Right cardiac atrium (tissue), 5 donors: ENCODE measurements at regions of chr7 and their contacts with region 1.

Region 1: DNA sequence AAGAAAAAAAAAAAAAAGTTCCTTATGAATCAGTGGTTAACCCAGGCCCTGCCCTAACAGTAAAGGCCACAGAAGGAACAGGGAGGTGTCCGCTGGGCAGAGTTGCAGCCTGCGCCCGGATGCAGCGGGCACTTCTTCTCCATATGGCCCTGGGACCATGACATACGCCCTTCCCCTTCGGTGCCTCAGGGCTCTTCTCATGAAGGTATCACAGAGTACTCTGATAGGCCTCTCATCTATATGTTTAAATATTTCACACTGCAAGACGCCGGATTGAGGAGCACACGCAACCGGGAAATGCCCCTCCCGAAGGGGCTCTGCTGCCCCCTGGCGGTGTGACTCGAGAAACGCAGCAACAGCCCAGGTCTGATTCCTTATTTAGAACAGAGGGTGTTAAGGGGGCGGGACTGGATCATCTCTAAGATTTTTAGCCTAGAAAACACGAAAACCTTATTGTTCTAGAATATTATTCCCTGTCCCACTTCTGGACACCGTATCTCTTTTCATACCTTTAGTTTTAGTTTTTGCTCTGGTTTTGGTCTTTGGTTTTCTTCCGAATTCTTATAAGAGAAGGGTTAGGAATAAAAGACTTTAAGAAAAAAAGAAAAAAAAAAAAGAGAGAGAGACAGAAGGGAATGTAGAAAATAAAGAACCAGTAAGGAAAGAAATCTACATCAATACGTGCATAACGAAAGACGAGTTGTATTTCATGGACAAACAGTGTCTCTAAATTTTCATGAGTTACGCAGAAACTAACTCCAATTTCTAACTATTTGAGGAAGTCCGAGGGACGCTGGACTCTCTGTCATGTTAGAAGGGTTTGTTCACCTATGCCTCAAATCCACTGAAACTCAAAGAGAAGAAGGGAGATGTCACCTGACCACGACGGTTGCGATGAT is 12.0 kb downstream of the DAGLB start:
- DNase-seq: peak; percentile 72 to 91 (median 87)
- ATAC-seq: peak; percentile 75 to 86
- H3K4me3 ChIP-seq: peak overlapping the region; percentile 9
- H3K27ac ChIP-seq: peak overlapping the region; percentile 60
- H3K4me1 ChIP-seq: no peaks in the 10 kb centered on the region
- H3K27me3 ChIP-seq: no peaks in the 10 kb centered on the region

Region 2: DNA sequence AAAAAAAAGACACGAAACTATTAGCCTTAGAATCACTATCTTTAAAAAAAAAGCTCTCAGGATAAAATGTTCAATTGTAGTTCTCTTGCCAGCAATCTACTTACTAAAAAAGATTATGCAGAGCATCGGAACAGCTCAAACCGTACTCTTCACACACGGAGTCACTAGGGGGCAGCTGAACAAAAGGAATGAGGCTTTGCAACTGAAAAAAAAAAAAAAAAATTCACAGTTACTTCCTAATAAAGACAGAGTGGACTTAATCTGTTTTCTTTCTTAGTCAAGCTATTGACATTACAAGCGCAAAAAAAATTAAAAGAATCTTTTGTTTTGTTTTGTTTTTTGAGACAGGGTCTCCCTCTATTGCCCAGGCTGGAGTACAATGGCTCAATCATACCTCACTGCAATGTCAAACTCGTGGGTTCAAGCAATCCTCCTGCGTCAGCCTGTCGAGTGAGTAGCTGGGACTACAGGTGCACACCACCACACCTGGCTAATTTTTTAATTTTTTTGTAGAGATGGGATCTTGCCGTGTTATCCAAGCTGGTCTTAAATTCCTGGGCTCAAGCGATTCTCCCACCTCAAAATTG is 438.4 kb before region 1 on chr7:
- intact Hi-C with region 1: loop called in 1 of 4 experiments (anchors 10 kb)
- DNase-seq: peak in 1 of 3 donors; percentile 30
- ATAC-seq: peak; percentile 70 to 71
- H3K4me3 ChIP-seq: no peak overlapping the region
- H3K27ac ChIP-seq: no peak overlapping the region
- H3K4me1 ChIP-seq: no peaks in the 10 kb centered on the region
- H3K27me3 ChIP-seq: no peaks in the 10 kb centered on the region

Region 3: GRCh38 chr7:7014827-7015610 is 579.3 kb after region 1 on chr7:
- intact Hi-C with region 1: no loop called
- DNase-seq: no peak
- ATAC-seq: no peak
- H3K4me3 ChIP-seq: no peak overlapping the region
- H3K27ac ChIP-seq: no peak overlapping the region
- H3K4me1 ChIP-seq: no peaks in the 10 kb centered on the region
- H3K27me3 ChIP-seq: no peaks in the 10 kb centered on the region